CD14-positive monocyte (primary cell): ENCODE measurements at regions of chr15 and their contacts with region 1.

Region 1: DNA sequence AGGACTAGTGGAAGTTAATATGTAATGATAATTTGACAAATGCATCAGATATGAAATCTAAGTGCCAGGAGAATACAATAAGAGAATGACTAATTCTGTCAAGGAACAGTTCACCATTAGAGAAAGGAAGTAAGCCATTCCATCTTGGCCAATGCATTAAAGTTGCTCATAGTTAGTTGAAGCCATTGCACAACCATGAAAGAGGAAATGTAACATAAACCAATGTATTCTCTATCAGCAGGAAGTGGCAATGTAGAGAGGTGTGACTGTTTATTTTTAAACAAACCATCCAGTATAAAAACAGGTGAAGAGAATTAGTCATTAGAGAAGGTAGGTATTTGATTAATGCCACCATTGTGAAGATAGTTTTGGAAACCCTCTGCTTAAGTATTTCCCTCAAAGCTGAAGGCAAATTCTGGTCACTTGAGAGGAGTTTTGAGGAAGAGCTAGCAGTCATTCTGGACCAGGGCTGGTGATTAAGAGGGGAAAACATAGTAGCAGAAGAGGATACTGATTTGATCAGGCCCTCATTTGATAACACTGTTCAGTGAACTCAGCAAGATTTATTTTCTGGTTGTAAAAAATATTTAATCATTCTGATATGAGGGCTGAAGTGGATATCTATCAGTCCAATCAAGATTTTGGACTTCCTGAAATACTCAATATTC is 10.8 kb upstream of the ANXA2 start:
- DNase-seq: peak; percentile 86 to 97 (median 95)
- H3K4me3 ChIP-seq: peak overlapping the region in 1 of 3 experiments; percentile 36
- H3K4me3 Mint-ChIP-seq: no peak overlapping the region
- H3K27ac ChIP-seq: peak overlapping the region; percentile 84 to 87
- H3K27ac Mint-ChIP-seq: peak overlapping the region; percentile 90 to 96 (median 93)
- H3K4me1 ChIP-seq: peaks cover 32 to 38% of the 10 kb centered on the region in 2 donors
- H3K4me1 Mint-ChIP-seq: peaks cover 30% of the 10 kb centered on the region
- H3K27me3 ChIP-seq: no peaks in the 10 kb centered on the region
- H3K27me3 Mint-ChIP-seq: peaks cover 0 to 7% (median 2%) of the 10 kb centered on the region in 3 donors
- CTCF ChIP-seq: no peak

Region 2: DNA sequence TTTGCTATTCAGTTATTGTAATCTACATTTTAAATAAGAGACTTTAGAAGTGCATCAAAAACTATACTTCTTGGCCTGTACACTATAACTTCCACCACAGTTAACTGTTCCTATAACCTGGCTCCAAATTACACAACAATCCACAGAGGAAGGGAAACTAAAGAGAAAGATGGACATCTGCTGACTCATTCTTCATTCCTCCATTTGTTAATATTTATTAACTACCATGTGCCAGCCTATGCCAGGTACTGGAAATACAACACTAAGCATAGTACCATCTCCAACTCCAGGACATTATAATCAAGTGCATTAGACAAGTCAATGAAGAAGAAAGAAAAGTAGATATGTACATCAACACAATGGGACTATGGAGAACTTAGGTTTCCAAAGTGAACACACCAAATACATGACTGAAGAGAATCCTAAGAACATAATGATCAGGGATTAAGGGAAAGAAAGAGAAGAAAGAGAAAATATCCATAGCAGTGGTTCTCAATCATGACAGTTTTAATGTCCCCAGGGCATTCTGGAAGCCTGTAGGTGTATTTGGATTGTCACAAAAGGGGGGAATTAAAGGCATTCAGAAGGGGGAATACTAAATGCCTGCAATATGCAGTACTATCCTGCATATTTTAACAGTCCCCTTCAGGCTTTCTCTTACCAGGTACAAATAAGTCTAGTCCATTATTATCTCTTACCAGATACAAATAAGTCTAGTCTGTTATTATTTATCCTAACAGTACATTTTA is 61.5 kb after region 1 on chr15:
- intact Hi-C with region 1: loop called in 1 of 2 experiments (anchors 10 kb)
- DNase-seq: peak in 2 of 3 donors; percentile 48 to 52
- H3K4me3 ChIP-seq: no peak overlapping the region
- H3K4me3 Mint-ChIP-seq: no peak overlapping the region
- H3K27ac ChIP-seq: peak overlapping the region in 1 of 2 donors; percentile 64
- H3K27ac Mint-ChIP-seq: peak overlapping the region in 5 of 7 donors; percentile 10 to 58 (median 12)
- H3K4me1 ChIP-seq: peaks cover 5 to 14% of the 10 kb centered on the region in 2 donors
- H3K4me1 Mint-ChIP-seq: peaks cover 13% of the 10 kb centered on the region
- H3K27me3 ChIP-seq: no peaks in the 10 kb centered on the region
- H3K27me3 Mint-ChIP-seq: no peaks in the 10 kb centered on the region
- CTCF ChIP-seq: no peak